ENCODE measurements at regions of chr5 and their contacts with region 1.

Region 1: DNA sequence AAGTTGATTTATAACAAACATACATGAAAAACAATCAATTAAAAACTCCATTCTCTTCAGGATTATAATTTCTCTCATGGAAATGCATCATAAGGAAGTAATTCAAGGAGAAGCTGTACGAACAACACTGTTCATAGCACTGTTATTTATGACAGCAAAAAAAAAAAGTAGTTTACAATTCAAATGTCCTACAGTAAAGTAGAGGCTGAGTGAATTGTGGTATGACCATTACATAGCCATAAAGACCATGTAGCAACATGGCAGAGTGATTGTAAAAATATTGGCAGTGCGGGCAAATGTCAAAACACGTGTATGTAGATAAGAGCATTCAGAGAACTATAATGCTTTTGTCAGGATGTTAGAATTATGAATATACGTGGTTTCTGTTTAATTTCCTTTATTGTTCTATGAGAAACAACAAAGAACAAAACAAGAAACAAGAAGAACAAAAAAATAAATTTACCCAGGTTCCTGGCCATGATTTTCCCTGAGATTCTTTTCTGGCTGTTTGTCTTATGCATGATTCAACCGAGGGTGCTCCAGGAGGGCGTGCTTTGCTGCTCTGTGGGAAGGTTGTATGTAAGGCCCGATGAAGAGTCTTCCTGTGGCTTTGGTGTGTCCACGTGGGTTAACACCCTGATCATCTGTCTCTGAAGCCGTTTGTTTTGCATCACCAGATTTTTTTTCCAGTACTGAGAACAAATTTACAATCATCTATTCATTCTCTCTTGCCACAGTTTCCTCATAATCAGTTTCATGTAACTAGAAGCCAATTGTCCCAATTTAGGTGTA is 28.8 kb downstream of the GCNT4 start:
- DNase-seq: peak in 28 of 35 experiments; percentile 6 to 64 (median 24)
- ATAC-seq: peak; percentile 75 to 85 (median 81)
- H3K4me3 ChIP-seq: no peak overlapping the region
- H3K4me3 Mint-ChIP-seq: peak overlapping the region; percentile 34 to 43 (median 42)
- H3K27ac ChIP-seq: peak overlapping the region; percentile 33
- H3K27ac Mint-ChIP-seq: peak overlapping the region; percentile 83 to 92
- H3K4me1 ChIP-seq: peaks cover 11 to 18% of the 10 kb centered on the region in 2 experiments
- H3K4me1 Mint-ChIP-seq: peaks cover 39 to 58% (median 47%) of the 10 kb centered on the region in 3 donors
- H3K27me3 ChIP-seq: no peaks in the 10 kb centered on the region
- H3K27me3 Mint-ChIP-seq: peaks cover 0 to 3% of the 10 kb centered on the region in 2 donors

Region 2: DNA sequence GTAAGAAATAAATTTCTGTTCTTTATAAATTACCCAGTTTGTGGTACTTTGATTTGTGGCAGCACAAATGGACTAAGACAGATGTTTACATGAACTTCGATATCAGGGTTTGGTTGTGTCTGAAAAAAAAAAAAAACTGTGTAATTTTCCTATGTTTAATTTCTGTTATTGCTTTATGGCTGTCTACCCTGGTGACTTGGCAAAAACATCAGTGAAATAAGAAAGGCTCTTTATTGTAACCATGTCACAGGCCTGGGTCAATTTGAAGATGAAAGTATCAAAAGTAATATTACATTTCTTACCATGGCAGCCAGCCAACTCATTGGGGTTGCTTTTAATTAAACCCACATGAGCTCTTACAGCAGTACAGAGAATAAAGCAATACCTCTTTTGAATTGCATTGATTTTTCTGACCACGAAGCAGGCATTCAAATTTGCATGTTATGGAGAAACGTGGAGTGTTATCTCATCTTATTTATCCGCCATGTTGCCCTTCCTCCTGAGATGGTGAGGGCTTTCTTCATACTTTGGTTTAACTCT is 1039.0 kb after region 1 on chr5:
- CTCF ChIA-PET with region 1: no interaction called
- POLR2A ChIA-PET with region 1: interaction called in 1 of 2 experiments, 19 read pairs
- DNase-seq: no peak
- ATAC-seq: no peak
- H3K4me3 ChIP-seq: no peak overlapping the region
- H3K4me3 Mint-ChIP-seq: no peak overlapping the region
- H3K27ac ChIP-seq: no peak overlapping the region
- H3K27ac Mint-ChIP-seq: no peak overlapping the region
- H3K4me1 ChIP-seq: no peaks in the 10 kb centered on the region
- H3K4me1 Mint-ChIP-seq: no peaks in the 10 kb centered on the region
- H3K27me3 ChIP-seq: peaks cover 0 to 2% of the 10 kb centered on the region in 2 experiments
- H3K27me3 Mint-ChIP-seq: peaks cover 15 to 23% of the 10 kb centered on the region in 2 donors